ENCODE measurements at regions of chr5 and their contacts with region 1.

Region 1: GRCh38 chr5:40277161-40277906 is 402.4 kb upstream of the PTGER4 start:
- DNase-seq: peak; percentile 22
- H3K4me3 Mint-ChIP-seq: peak overlapping the region; percentile 5
- H3K27ac Mint-ChIP-seq: peak overlapping the region; percentile 87
- H3K4me1 Mint-ChIP-seq: peaks cover 53% of the 10 kb centered on the region
- H3K27me3 Mint-ChIP-seq: no peaks in the 10 kb centered on the region

Region 2: GRCh38 chr5:40046792-40047191 is 230.5 kb before region 1 on chr5:
- intact Hi-C with region 1: no loop called
- DNase-seq: no peak
- H3K4me3 Mint-ChIP-seq: no peak overlapping the region
- H3K27ac Mint-ChIP-seq: no peak overlapping the region
- H3K4me1 Mint-ChIP-seq: peaks cover 12% of the 10 kb centered on the region
- H3K27me3 Mint-ChIP-seq: no peaks in the 10 kb centered on the region

Region 3: GRCh38 chr5:40171971-40172370 is 105.4 kb before region 1 on chr5:
- intact Hi-C with region 1: no loop called
- DNase-seq: no peak
- H3K4me3 Mint-ChIP-seq: no peak overlapping the region
- H3K27ac Mint-ChIP-seq: no peak overlapping the region
- H3K4me1 Mint-ChIP-seq: peaks cover 5% of the 10 kb centered on the region
- H3K27me3 Mint-ChIP-seq: no peaks in the 10 kb centered on the region

Region 4: DNA sequence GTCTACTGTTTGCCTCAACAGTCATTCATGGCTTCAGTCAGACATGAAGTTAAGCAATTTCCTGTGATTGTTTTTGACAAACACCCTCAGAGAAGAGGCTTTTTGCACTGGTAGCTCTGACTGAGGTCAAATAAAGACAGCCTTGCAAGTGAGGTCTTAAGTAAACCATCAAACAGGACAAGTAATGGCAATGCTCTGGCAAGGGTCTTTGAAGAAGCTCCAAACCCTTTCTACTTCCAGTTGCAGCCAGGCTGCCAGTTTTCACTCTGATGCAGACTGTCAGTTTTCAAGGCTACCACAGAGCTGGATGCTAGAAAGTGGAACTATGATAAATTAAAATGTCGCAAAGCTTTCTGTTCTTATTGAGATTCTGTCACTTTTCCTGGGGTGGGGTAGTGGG is 19.1 kb before region 1 on chr5:
- intact Hi-C with region 1: loop called (anchors 2 kb)
- DNase-seq: no peak
- H3K4me3 Mint-ChIP-seq: no peak overlapping the region
- H3K27ac Mint-ChIP-seq: peak overlapping the region; percentile 48
- H3K4me1 Mint-ChIP-seq: peaks cover 12% of the 10 kb centered on the region
- H3K27me3 Mint-ChIP-seq: no peaks in the 10 kb centered on the region

Region 5: GRCh38 chr5:40333459-40334244 is 56.3 kb after region 1 on chr5:
- intact Hi-C with region 1: loop called (anchors 1 kb)
- DNase-seq: no peak
- H3K4me3 Mint-ChIP-seq: no peak overlapping the region
- H3K27ac Mint-ChIP-seq: peak overlapping the region; percentile 43
- H3K4me1 Mint-ChIP-seq: peaks cover 43% of the 10 kb centered on the region
- H3K27me3 Mint-ChIP-seq: no peaks in the 10 kb centered on the region

Region 6: DNA sequence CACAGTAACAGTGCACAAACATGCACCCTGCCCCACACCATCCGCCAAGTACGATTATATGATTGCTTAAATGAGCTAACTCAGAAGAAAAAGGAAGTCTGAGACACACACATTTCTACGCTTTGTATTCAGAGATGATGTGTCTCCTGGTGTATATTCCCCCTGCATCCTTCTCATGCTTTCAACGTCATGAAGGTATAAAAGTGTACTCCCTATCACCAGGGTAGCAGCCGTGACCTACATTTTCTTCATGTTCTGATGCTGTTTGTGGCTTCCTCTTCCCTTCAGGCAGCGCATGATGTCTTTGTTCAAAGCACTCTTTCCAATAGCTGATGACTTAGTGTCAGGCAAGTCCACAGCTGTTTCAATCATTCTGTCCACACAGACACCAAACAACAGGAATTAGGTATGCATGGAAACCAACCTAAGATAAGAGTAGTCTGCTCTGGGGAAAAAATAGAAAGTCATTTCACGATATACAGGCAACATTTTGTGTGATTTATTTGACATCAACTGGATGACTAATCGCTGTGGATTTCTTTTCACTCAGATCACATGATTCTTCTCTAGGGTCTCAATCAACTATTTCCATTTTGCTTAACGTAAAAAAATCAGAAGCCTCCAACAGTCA is 133.0 kb after region 1 on chr5:
- intact Hi-C with region 1: loop called (anchors 1 kb)
- DNase-seq: peak; percentile 65
- H3K4me3 Mint-ChIP-seq: peak overlapping the region; percentile 66
- H3K27ac Mint-ChIP-seq: peak overlapping the region; percentile 90
- H3K4me1 Mint-ChIP-seq: peaks cover 58% of the 10 kb centered on the region
- H3K27me3 Mint-ChIP-seq: no peaks in the 10 kb centered on the region

Region 7: GRCh38 chr5:40486437-40487275 is 209.3 kb after region 1 on chr5:
- intact Hi-C with region 1: loop called (anchors 1 kb)
- DNase-seq: peak; percentile 64
- H3K4me3 Mint-ChIP-seq: peak overlapping the region; percentile 19
- H3K27ac Mint-ChIP-seq: peak overlapping the region; percentile 75
- H3K4me1 Mint-ChIP-seq: peaks cover 78% of the 10 kb centered on the region
- H3K27me3 Mint-ChIP-seq: no peaks in the 10 kb centered on the region

Measured in activated T-helper 2 cell treated with anti-CD3 and anti-CD28 coated beads, Interferon-gamma antibody, Interleukin-2, Interleukin-4, amounts not matched to agents 10 μg/mL and 5 μg/mL and 100 μg/mL, durations not matched to agents 14 hours and 24 hours and 36 hours (primary cell).